ENCODE measurements at regions of chr5 and their contacts with region 1.

Region 1: GRCh38 chr5:57488215-57488955 is 5.8 kb upstream of the ACTBL2 start:
- DNase-seq: no peak
- ATAC-seq: peak in 3 of 4 donors; percentile 74 to 78 (median 78)
- H3K4me3 ChIP-seq: no peak overlapping the region
- H3K27ac ChIP-seq: no peak overlapping the region
- H3K4me1 ChIP-seq: peaks cover 0 to 12% (median 5%) of the 10 kb centered on the region in 12 donors
- H3K27me3 ChIP-seq: no peaks in the 10 kb centered on the region
- CTCF ChIP-seq: no peak
- POLR2A ChIP-seq: no peak

Region 2: DNA sequence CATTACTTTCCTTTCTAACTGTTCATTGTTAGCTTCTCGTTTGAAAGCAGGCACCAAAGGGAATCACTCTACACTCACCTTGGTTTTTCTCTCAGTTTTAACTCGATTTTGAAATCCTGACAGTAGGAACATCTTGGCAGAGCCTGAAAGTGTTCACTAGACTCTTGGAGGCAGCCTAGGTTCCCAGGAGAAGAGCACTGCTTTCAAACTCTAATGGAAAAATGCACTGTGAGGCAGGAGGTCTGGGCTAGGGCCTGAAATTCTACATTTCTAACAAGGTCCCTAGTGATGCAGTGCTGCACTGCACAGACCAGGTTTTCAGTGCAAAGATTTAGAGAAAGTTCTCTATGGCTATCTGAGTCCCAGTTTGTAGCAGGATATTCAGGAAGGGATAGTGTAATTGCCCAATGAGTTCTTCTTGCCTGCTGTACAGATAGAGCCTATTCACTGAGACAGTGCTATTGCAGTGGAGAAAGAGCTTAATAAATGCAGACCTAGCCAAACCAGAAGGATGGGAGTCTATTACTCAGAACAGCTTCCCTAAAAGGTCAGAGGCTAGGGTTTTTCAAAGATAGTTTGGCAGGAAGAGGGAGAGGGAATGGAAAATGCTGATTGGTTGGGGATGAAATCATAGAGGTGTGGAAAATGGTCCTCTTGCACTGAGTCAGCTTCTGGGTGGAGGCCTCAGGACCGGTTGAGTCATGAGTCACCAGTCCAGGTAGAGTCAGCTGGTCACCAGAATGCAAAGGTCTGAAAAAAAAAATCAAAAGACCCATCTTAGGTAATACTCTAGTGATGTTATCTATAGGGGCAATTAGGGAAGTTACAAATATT is 160.6 kb before region 1 on chr5:
- intact Hi-C with region 1: loop called in 1 of 10 experiments (anchors 10 kb)
- DNase-seq: no peak
- ATAC-seq: no peak
- H3K4me3 ChIP-seq: no peak overlapping the region
- H3K27ac ChIP-seq: no peak overlapping the region
- H3K4me1 ChIP-seq: peaks cover 0 to 17% (median 6%) of the 10 kb centered on the region in 12 donors
- H3K27me3 ChIP-seq: no peaks in the 10 kb centered on the region
- CTCF ChIP-seq: no peak
- POLR2A ChIP-seq: no peak

Region 3: DNA sequence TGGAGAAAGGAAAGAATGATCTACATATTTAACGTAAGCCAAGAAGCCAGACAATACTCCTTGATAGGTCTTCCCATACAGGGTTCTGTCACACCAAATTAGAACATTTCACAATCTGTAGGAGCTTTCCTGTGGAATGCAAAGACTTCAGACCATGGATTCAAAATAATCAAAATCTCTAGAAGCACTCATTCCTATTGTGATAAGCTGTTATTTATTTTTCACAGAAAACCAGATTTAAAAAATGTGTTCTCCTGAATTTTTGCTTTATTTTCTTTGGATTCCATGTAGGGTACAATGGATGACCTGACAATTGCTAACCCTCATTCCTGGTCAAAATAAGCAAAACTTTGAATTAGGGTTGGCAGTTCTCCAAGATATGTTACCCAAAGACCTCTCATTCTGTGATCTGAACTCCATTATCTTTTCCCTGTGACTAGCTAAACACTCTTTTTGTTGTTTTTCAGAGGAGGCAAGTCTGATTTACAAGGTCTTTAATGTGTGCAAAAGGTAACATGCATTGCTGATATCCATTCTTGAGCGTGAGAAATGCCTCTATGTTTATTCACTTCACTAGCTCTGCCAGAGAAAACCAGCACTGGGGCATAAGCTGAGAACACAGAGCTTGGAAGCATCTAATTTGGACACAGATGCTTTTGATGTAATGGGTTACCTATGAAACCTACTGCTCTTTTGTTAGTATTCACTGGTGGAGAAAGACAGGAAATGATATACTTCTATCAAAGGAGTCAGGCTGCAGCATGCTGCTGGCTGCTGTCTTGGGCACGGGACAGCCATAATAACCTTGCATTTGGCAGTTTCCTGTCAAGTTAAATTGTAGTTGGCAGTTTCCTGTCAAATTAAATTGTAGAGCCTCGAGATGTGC is 37.2 kb before region 1 on chr5:
- intact Hi-C with region 1: loop called in 1 of 10 experiments (anchors 5 kb)
- DNase-seq: no peak
- ATAC-seq: peak in 1 of 4 donors; percentile 26
- H3K4me3 ChIP-seq: no peak overlapping the region
- H3K27ac ChIP-seq: no peak overlapping the region
- H3K4me1 ChIP-seq: peaks cover 0 to 9% (median 0%) of the 10 kb centered on the region in 12 donors
- H3K27me3 ChIP-seq: no peaks in the 10 kb centered on the region
- CTCF ChIP-seq: no peak
- POLR2A ChIP-seq: no peak

Measured in heart left ventricle (tissue), 16 donors.